Activated CD4-positive, alpha-beta memory T cell treated with anti-CD3 and anti-CD28 coated beads, Interleukin-2, amount 10 ng/mL, durations not matched to agents 7 days and 5 days (primary cell): ENCODE measurements at regions of chr2 and their contacts with region 1.

Region 1: GRCh38 chr2:161136696-161137324 is 23.4 kb upstream of the TANK start:
- DNase-seq: no peak
- H3K4me3 Mint-ChIP-seq: peak overlapping the region; percentile 89
- H3K27ac Mint-ChIP-seq: peak overlapping the region; percentile 87
- H3K4me1 Mint-ChIP-seq: peaks cover 51% of the 10 kb centered on the region
- H3K27me3 Mint-ChIP-seq: no peaks in the 10 kb centered on the region

Region 2: DNA sequence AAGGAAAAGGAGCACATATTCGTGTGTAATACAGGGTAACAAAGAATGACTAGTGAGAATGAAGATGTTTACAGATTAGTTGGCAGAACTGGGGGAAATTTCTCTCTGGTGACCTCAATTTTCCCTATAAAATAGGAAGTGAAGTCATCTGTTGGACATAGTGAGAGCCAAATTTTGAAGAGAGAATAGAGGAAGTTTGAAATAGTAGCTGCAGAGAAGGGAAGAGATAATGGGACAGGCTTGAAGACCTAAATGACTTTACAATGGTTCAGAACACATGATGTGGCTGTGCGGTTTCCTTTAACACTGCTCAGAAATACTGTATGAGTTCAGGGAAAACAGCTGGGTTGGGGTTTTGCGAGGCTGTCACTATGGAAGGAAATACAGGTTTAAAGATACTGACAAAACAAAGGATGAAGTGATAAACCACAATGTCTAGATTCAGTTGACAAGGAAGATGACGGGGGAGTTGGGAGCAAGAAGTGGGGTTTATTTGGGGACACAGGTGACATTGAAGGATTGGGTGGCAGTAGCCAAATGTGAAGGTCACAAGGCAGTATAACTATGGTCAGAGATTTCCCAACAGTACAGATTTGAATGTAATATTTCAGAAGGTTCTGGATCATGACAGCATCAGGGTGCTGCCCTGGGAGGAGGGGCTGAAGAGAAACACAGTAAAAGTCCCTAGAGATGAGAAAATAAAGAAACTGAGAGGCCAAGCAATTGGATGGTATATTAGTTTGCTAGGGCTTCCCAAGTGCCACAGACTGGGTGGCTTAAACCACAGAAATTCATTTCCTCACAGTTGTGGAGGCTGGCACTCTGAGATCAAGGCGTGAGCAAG is 59.2 kb before region 1 on chr2:
- CTCF ChIA-PET with region 1: interaction called, 4 read pairs
- POLR2A ChIA-PET with region 1: interaction called, 13 read pairs
- DNase-seq: peak; percentile 86
- H3K4me3 Mint-ChIP-seq: peak overlapping the region; percentile 36
- H3K27ac Mint-ChIP-seq: peak overlapping the region; percentile 90
- H3K4me1 Mint-ChIP-seq: peaks cover 49% of the 10 kb centered on the region
- H3K27me3 Mint-ChIP-seq: no peaks in the 10 kb centered on the region

Region 3: DNA sequence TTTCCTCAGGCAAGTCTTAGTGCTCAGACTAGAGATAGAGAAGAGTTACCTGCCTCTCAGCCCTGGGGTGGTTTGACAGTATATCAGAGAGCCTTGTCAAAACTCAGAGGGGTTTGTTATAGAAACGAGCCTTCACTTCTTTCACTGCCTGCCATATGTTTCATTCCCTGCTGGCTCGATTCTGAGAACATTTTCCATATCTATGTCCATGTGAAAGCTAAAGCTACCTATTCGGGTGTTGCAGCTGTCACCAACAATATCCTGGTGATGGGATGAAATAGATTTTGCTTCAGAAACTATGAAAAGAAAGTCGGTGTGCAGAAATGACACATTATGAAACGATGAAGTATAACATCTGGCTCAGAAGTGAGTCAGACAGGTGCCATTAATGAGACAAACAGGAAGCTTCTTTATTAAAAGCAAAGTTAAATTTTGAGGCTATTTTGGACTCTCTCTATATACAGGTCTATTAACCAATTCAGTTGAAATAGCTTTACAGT is 32.7 kb before region 1 on chr2:
- CTCF ChIA-PET with region 1: no interaction called
- POLR2A ChIA-PET with region 1: interaction called, 15 read pairs
- DNase-seq: no peak
- H3K4me3 Mint-ChIP-seq: peak overlapping the region; percentile 36
- H3K27ac Mint-ChIP-seq: peak overlapping the region; percentile 34
- H3K4me1 Mint-ChIP-seq: peaks cover 32% of the 10 kb centered on the region
- H3K27me3 Mint-ChIP-seq: peaks cover 2% of the 10 kb centered on the region

Region 4: DNA sequence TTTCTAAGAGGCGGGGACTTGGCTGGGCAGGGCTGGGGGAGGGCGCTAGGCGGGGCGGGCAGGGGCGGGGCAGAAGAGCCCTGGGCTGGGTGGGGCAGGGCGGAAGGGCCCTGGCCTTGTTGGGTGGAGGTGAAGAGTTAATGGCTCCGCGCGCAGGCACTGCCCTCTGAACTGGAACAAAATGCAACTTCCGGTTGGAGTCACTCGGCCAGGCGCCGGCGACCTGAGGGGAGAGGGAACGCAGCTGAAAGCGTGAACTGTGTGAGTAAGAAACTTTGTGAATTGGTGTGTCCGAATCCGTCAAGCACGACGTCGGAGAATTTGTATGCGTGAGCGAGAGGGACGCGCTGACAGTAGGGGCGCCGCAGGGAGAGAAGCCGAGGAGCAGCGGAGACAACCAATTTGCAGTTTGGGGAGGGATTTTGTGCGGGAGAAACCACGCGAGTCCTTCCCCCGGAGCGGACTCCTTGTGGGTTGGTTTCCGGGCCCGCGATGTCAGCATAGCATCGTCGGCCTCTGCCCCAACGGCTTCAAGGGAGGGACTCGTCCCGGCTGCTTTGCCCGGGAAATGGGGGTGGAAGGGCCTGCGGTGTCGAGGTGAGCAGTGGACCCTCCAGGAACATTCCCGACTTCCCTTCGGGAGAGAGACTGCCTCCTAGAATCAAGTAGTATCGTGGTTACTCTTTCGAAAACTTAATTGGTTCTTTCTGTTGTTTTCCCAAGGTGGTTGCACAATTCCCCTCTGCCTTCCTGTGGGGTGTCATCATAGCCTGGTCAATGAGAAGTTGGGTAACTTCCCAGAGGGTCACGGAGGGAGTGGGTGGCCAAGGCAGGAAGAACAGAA is 23.6 kb after region 1 on chr2 and contains the start of gene TANK:
- CTCF ChIA-PET with region 1: interaction called, 3 read pairs
- POLR2A ChIA-PET with region 1: interaction called, 17 read pairs
- DNase-seq: peak; percentile 94
- H3K4me3 Mint-ChIP-seq: peak within 1 kb of the TSS; percentile 96
- H3K27ac Mint-ChIP-seq: peak within 1 kb of the TSS; percentile 98
- H3K4me1 Mint-ChIP-seq: peaks cover 52% of the 10 kb centered on the region
- H3K27me3 Mint-ChIP-seq: no peaks in the 10 kb centered on the region
- total RNA-seq, gene TANK: 118 to 126 TPM

Region 5: DNA sequence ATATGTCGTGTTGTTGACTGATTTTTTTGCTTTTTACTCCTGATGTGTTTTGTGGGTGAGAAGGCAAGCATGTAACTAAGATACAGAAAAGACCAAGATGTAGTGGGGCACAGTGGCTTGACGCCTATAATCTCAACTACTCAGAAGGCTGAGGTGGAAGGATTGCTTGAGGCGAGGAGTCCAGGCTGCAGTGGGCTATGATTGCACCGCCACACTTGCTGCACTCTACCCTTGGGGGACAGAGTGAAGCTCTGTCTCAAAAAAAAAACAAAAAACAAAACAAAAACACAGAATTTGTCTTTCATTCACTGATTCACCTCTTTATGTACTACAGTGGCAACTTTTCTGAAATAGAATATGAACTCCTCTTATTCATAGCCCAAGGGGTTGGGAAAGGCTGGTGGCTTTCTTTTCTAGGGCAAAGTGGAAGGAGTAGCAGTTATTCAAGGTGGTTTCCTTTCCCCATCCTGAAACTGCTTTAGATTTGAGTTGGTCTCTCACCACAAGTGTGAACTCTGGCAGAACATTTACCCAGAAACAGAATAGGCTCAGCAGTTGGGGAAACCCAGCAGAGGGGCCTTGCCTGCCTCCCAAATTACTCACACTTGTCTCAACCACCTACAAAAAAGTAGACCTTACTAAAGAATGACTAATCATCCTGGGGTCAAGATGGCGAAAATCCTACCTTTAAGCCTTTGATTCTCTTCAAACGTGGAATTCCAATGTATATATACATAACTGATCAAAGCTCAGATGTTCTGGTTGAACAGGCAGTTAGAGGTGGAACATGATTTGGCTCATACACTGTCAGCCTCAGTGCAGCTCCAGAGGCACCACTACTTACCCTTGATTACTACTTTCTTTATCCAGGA is 30.0 kb after region 1 on chr2:
- CTCF ChIA-PET with region 1: interaction called, 6 read pairs
- POLR2A ChIA-PET with region 1: interaction called, 16 read pairs
- DNase-seq: peak; percentile 73
- H3K4me3 Mint-ChIP-seq: peak overlapping the region; percentile 40
- H3K27ac Mint-ChIP-seq: peak overlapping the region; percentile 84
- H3K4me1 Mint-ChIP-seq: peaks cover 84% of the 10 kb centered on the region
- H3K27me3 Mint-ChIP-seq: no peaks in the 10 kb centered on the region